Posterior cingulate gyrus (tissue), 11 donors: ENCODE measurements at regions of chr3 and their contacts with region 1.

Region 1: GRCh38 chr3:156535162-156535627 is 19.7 kb downstream of the SSR3 start:
- DNase-seq: peak in 6 of 10 donors; percentile 20 to 89 (median 46)

Region 2: GRCh38 chr3:157136647-157137387 is 601.6 kb after region 1 on chr3:
- intact Hi-C with region 1: loop called (anchors 5 kb)
- DNase-seq: peak in 2 of 10 donors; percentile 22 to 82